ENCODE measurements at regions of chr11 and their contacts with region 1.

Region 1: GRCh38 chr11:64088162-64089026 is 52.7 kb downstream of the FLRT1 start:
- DNase-seq: peak in 1 of 2 experiments; percentile 49
- H3K4me3 ChIP-seq: no peak overlapping the region
- H3K4me3 Mint-ChIP-seq: no peak overlapping the region
- H3K27ac Mint-ChIP-seq: no peak overlapping the region
- H3K4me1 ChIP-seq: peaks cover 10% of the 10 kb centered on the region
- H3K4me1 Mint-ChIP-seq: peaks cover 7% of the 10 kb centered on the region
- H3K27me3 ChIP-seq: no peaks in the 10 kb centered on the region
- H3K27me3 Mint-ChIP-seq: no peaks in the 10 kb centered on the region
- CTCF ChIP-seq: peak; percentile 49 to 57

Region 2: GRCh38 chr11:63888170-63889086 is 200.0 kb before region 1 on chr11:
- CTCF ChIA-PET with region 1: no interaction called
- POLR2A ChIA-PET with region 1: no interaction called
- intact Hi-C with region 1: no loop called
- DNase-seq: peak; percentile 87 to 92
- H3K4me3 ChIP-seq: peak overlapping the region; percentile 56
- H3K4me3 Mint-ChIP-seq: peak overlapping the region; percentile 95
- H3K27ac Mint-ChIP-seq: peak overlapping the region; percentile 98
- H3K4me1 ChIP-seq: peaks cover 33% of the 10 kb centered on the region
- H3K4me1 Mint-ChIP-seq: peaks cover 34% of the 10 kb centered on the region
- H3K27me3 ChIP-seq: no peaks in the 10 kb centered on the region
- H3K27me3 Mint-ChIP-seq: no peaks in the 10 kb centered on the region
- CTCF ChIP-seq: no peak

Region 3: GRCh38 chr11:64040684-64041322 is 47.6 kb before region 1 on chr11:
- CTCF ChIA-PET with region 1: no interaction called
- POLR2A ChIA-PET with region 1: no interaction called
- intact Hi-C with region 1: loop called (anchors 2 kb)
- DNase-seq: peak; percentile 67 to 75
- H3K4me3 ChIP-seq: no peak overlapping the region
- H3K4me3 Mint-ChIP-seq: no peak overlapping the region
- H3K27ac Mint-ChIP-seq: no peak overlapping the region
- H3K4me1 ChIP-seq: peaks cover 13% of the 10 kb centered on the region
- H3K4me1 Mint-ChIP-seq: peaks cover 7% of the 10 kb centered on the region
- H3K27me3 ChIP-seq: no peaks in the 10 kb centered on the region; the same call in 1 of the 2 replicates
- H3K27me3 Mint-ChIP-seq: no peaks in the 10 kb centered on the region
- CTCF ChIP-seq: peak; percentile 61 to 89

Region 4: DNA sequence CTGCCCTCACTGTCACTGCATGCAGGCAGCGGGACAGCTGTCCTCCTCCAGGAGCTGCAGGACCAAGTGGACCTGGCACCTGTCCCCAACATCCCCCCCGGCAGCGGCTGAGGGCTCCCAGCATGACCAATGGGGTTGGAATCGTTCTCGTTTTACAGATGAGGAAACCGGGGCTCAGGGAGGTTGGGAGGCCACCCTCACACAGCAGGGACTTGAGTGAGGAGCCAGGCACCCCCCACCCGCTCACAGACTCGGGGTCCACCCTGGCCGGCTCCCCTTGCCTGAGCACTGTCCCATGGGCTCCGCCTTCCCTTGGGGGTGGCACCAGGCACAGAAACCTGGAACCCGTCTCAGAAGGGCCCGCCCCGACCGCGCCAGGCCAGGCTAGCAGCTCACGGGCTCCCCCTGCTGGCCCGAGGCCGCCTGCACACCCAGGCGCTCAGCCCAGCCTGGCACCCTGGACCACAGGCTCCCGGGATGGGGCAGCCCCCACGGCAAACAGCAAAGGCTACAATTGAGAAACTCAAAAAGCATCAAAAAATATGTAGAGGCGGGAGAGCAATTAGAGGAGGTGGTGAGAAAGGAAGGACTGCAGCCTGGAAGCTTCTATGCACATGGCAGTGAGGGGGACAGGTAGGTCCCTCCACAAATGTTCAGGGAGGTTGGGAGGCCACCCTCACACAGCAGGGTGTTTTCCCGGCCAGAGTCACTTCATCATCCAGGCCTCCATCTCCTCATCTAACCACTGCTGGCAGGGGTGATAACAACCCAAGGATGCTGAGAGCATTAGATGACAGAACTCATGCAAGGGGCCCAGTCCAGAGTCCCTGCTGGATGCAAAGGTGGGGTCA is 64.7 kb after region 1 on chr11:
- CTCF ChIA-PET with region 1: interaction called, 6 read pairs
- POLR2A ChIA-PET with region 1: no interaction called
- intact Hi-C with region 1: loop called (anchors 1 kb)
- DNase-seq: peak in 1 of 2 experiments; percentile 82
- H3K4me3 ChIP-seq: no peak overlapping the region
- H3K4me3 Mint-ChIP-seq: no peak overlapping the region
- H3K27ac Mint-ChIP-seq: no peak overlapping the region
- H3K4me1 ChIP-seq: no peaks in the 10 kb centered on the region
- H3K4me1 Mint-ChIP-seq: peaks cover 11% of the 10 kb centered on the region
- H3K27me3 ChIP-seq: no peaks in the 10 kb centered on the region
- H3K27me3 Mint-ChIP-seq: no peaks in the 10 kb centered on the region
- CTCF ChIP-seq: peak; percentile 98 to 99

Region 5: DNA sequence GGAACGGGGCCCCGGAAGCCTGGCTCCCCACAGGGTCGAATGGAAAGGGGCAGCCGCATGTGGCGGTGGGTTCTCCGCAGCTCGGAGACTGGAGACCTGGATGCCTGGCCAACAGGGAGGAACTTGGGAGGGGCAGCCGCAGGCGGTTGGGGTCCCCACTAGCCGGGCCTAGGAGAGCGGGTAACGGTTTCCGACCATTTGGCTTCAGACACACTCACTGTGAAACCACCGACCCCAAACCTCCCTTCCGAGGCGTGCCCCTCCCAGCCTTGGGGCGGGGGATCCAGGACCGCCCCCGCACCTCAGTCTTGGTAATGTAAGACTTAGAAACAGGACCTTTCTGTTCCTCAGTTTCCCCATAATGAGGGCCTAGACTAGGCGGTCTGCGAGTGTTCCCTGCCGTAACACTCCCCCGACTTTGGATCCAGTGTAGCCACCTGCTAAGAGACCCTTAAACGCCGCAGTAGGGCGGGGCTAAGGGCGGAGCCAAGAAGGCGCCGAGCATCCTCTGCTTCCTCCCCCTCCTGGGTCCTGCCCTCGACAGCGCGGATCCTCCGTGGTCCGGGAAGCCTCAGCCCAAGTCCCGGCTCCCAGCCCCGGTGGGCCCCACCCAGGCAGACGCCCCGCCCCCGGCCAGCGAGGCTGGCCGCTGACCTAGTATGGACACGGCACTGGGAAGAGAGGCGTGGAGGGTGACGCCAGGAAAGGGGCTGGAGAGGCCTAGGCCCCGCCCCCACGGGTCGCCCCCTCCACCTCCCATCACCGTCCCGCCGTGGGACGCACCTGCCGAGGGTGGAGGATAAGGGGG is 657.3 kb after region 1 on chr11:
- CTCF ChIA-PET with region 1: no interaction called
- POLR2A ChIA-PET with region 1: no interaction called
- intact Hi-C with region 1: no loop called
- DNase-seq: no peak
- H3K4me3 ChIP-seq: peak overlapping the region; percentile 59; the same call in 1 of the 2 replicates
- H3K4me3 Mint-ChIP-seq: peak overlapping the region; percentile 65
- H3K27ac Mint-ChIP-seq: no peak overlapping the region
- H3K4me1 ChIP-seq: peaks cover 38% of the 10 kb centered on the region
- H3K4me1 Mint-ChIP-seq: peaks cover 9% of the 10 kb centered on the region
- H3K27me3 ChIP-seq: no peaks in the 10 kb centered on the region
- H3K27me3 Mint-ChIP-seq: peaks cover 6% of the 10 kb centered on the region
- CTCF ChIP-seq: no peak